Sciatic nerve (tissue), 2 donors: ENCODE measurements at regions of chr5 and their contacts with region 1.

Region 1: DNA sequence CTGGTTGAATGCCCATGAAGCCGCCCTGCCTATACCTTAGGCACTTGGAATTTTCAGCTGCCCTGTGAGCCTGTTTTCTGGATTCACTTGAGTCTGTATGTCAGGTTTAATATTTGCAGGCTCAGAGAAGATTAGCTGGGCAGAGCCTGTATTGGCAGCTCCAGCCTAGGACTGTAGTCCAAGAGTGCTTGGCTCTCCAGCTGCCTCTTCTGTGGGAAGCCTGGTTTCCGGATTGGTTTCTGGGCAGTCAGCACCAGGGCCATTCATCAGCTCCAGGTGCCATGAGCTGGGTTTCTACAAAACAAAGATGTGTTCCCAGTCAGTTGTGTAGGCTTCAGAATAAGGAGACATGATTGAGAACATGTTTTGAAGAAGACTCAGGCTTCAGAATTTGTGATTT is 90.1 kb downstream of the ARHGAP26 start:
- DNase-seq: no peak
- ATAC-seq: no peak

Region 2: GRCh38 chr5:142133330-142134206 is 726.7 kb before region 1 on chr5:
- intact Hi-C with region 1: loop called (anchors 5 kb)
- DNase-seq: no peak
- ATAC-seq: no peak